Calu3 (cell line): ENCODE measurements at regions of chr3 and their contacts with region 1.

Region 1: DNA sequence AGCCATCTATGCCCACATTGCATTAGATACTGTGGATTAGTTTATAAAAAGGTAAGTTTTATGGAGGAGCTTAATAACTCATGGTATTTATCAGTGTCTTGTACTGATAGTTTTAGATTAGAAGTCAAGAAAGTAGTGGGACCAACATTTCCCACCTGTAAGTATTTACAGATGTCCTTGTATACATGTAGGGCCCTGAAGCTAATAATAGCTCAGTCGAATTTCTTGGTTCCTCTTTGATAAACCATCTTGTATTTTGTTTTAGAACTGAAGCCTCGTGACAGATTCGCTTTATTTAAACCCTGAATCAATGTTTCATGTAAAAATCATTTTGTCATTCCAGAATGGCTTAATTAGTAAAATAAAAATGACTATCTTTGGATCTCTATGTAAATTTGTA is 73.4 kb downstream of the CRYBG3 start:
- DNase-seq: no peak
- H3K4me3 Mint-ChIP-seq: no peak overlapping the region
- H3K27ac Mint-ChIP-seq: no peak overlapping the region
- H3K4me1 Mint-ChIP-seq: no peaks in the 10 kb centered on the region
- H3K27me3 Mint-ChIP-seq: no peaks in the 10 kb centered on the region
- CTCF ChIP-seq: no peak

Region 2: DNA sequence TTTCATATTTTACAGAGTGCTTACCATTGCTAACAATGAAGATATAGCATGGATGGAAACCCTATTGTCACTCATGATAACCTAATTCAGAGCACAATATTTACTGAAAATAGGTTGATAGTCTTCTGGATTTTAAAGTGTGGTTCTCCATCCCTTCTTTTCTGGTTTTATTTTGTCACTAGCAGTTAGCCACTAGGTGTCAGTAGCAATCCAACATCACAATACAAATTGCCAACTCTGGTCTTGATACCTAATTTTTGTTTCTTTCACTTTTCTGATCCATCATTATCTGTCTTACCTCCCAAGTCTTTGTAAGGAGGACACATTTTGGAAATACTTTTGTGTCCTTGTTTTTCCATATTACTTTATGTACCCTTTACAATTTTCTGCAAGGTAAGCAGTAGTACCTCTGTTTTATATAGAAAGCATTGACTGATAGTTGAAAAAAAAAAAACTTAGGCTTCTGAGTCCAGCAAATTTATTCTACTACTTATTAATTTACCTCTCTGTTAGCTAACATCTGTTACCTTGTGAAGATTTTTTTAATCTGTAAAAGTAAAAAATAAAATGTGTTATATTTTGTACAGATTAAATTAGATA is 101.7 kb before region 1 on chr3:
- CTCF ChIA-PET with region 1: no interaction called
- intact Hi-C with region 1: loop called (anchors 5 kb)
- DNase-seq: peak; percentile 22
- H3K4me3 Mint-ChIP-seq: no peak overlapping the region
- H3K27ac Mint-ChIP-seq: no peak overlapping the region
- H3K4me1 Mint-ChIP-seq: no peaks in the 10 kb centered on the region
- H3K27me3 Mint-ChIP-seq: no peaks in the 10 kb centered on the region
- CTCF ChIP-seq: peak; percentile 37

Region 3: GRCh38 chr3:97872525-97873042 is 22.6 kb before region 1 on chr3:
- CTCF ChIA-PET with region 1: no interaction called
- intact Hi-C with region 1: no loop called
- DNase-seq: no peak
- H3K4me3 Mint-ChIP-seq: no peak overlapping the region
- H3K27ac Mint-ChIP-seq: no peak overlapping the region
- H3K4me1 Mint-ChIP-seq: no peaks in the 10 kb centered on the region
- H3K27me3 Mint-ChIP-seq: no peaks in the 10 kb centered on the region
- CTCF ChIP-seq: no peak

Region 4: DNA sequence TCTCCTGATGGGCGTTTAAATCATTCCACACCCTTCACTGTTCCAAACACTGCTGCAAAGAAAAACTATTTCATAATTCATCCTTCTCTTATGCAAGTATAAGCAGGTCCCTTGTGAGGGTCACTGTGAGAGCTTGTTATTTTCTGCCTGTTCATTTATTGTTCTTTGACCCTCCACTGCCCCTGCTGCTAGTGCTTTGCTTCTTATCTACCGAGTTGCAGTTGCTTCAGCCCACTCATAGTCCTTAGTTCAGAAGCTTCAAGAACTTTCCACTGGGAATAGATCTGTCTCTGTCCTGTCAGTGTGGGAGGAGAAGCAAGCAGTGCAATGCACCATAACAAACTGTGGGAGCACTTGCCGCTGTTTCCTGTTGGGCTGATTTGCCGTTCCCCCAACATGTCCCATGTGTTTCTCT is 37.2 kb after region 1 on chr3:
- CTCF ChIA-PET with region 1: no interaction called
- intact Hi-C with region 1: no loop called
- DNase-seq: no peak
- H3K4me3 Mint-ChIP-seq: no peak overlapping the region
- H3K27ac Mint-ChIP-seq: no peak overlapping the region
- H3K4me1 Mint-ChIP-seq: no peaks in the 10 kb centered on the region
- H3K27me3 Mint-ChIP-seq: no peaks in the 10 kb centered on the region
- CTCF ChIP-seq: no peak